Transverse colon (tissue), 4 donors: ENCODE measurements at regions of chr13 and their contacts with region 1.

Region 1: DNA sequence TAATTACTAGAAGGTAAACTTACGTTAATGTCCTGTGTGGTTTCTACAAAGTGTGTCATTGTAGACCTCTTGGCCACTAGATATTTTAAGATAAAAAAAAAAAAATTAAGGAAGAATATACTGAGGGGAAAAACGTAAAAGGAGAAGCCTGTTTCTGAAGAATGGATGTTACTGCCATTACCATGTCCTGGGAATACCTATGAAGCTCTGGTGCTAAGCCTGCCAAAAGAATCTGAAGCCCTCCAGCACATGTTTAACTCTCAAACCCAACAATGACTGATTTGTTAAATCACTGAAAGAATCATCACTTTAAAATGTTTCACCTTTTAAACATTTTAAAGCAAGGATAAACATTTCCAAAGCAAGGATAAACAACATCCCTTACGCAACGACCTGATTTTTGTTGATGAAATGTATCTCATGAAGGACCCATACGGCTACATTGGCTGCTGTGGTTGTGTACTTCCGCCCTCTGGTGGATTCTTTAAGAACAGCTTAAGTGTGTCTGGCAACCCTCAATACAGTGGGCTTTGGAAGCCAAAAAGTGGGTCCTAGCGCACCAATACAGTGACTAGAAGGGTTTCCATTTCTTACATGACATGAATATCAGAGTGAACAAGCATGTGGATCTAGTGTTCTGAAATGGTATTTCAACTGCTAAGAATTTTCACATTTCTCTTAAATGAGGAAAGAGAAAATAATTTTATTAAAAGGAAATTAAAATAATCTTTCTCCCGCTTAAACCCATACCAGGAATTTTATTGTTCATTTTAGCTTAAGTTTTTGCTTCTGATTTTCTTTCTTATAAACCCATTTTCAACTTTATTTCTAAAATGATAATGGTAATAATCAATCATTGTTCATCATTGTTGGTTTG is 74.5 kb upstream of the RAP2A start:
- DNase-seq: peak; percentile 37
- H3K4me3 ChIP-seq: no peak overlapping the region
- H3K27ac ChIP-seq: peak overlapping the region in 2 of 4 donors; percentile 23 to 24
- H3K4me1 ChIP-seq: peaks cover 0 to 8% (median 2%) of the 10 kb centered on the region in 4 donors
- H3K27me3 ChIP-seq: no peaks in the 10 kb centered on the region
- CTCF ChIP-seq: peak; percentile 79 to 87 (median 85)
- EP300 ChIP-seq: no peak
- POLR2A ChIP-seq: no peak

Region 2: GRCh38 chr13:97026531-97027161 is 332.8 kb before region 1 on chr13:
- in situ Hi-C with region 1: no loop called
- intact Hi-C with region 1: loop called (anchors 10 kb)
- DNase-seq: no peak
- H3K4me3 ChIP-seq: no peak overlapping the region
- H3K27ac ChIP-seq: peak overlapping the region in 1 of 4 donors; percentile 21
- H3K4me1 ChIP-seq: peaks cover 0 to 12% (median 5%) of the 10 kb centered on the region in 4 donors
- H3K27me3 ChIP-seq: no peaks in the 10 kb centered on the region
- CTCF ChIP-seq: no peak
- EP300 ChIP-seq: no peak
- POLR2A ChIP-seq: no peak

Region 3: DNA sequence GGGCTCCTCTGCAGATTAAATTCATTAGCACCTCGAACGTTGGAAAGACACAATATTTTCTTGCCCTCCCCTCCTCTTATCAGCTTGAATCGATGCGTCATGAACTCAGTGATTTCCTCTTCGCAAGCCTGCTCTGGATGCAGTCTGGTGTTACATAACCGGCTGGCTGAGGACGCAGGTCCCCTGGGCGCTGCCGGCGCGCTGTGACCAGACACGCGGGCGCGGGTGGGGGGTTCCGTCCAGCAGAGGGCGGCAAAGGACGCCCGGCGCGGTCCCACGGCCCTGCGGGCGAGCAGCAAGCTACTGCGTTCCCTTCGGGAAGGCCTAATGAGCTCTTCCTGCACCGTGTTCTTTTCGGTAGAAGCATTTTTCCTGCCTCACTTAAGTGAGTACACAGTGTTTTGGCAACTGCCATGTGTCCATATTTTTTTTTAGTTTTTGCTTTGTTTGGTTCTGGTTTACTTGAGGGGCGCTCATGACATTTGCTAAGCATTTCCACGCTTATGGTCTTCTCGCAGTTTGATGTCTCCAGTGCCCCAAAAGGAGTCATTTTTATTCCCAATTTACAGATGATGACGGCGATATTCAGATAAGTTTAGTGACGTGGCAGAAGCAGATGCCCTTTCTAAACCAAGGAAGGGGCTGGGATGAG is 249.5 kb before region 1 on chr13:
- in situ Hi-C with region 1: loop called in 1 of 4 experiments (anchors 10 kb)
- intact Hi-C with region 1: loop called (anchors 5 kb)
- DNase-seq: peak; percentile 92
- H3K4me3 ChIP-seq: peak overlapping the region in 1 of 4 donors; percentile 8
- H3K27ac ChIP-seq: peak overlapping the region; percentile 39 to 84 (median 80)
- H3K4me1 ChIP-seq: peaks cover 11 to 38% (median 26%) of the 10 kb centered on the region in 4 donors
- H3K27me3 ChIP-seq: no peaks in the 10 kb centered on the region
- CTCF ChIP-seq: peak; percentile 93 to 97 (median 96)
- EP300 ChIP-seq: no peak
- POLR2A ChIP-seq: no peak

Region 4: DNA sequence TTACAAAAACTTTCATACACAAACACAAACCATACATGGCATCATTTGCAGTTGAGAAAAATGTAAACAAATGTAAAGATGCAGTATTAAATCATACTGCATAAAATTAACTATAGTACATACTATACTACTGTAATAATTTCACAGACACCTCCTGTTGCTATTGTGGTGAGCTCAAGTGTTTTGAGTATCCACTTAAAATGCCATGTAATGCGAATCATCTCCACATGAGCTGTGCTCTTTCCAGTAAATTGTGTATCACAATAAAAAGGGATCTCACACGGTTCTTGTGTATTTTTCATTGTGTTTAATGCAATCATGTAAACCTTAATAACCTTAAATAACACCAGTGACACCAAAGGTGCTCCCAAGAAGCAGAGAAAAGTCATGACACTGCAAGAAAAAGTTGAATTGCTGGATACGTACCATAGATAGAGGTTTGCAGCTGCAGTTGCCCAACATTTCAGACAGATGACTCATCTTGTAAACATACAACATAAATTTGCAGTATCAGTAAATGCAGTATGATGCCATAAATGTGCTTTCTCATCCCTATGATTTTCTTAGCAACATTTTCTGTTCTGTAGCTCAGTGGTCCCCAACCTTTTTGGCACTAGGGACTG is 241.2 kb after region 1 on chr13:
- in situ Hi-C with region 1: no loop called
- intact Hi-C with region 1: no loop called
- DNase-seq: no peak
- H3K4me3 ChIP-seq: no peak overlapping the region
- H3K27ac ChIP-seq: no peak overlapping the region
- H3K4me1 ChIP-seq: no peaks in the 10 kb centered on the region
- H3K27me3 ChIP-seq: no peaks in the 10 kb centered on the region
- CTCF ChIP-seq: no peak
- EP300 ChIP-seq: no peak
- POLR2A ChIP-seq: no peak

Region 5: GRCh38 chr13:98685146-98685545 is 1325.7 kb after region 1 on chr13:
- in situ Hi-C with region 1: no loop called
- intact Hi-C with region 1: no loop called
- DNase-seq: no peak
- H3K4me3 ChIP-seq: no peak overlapping the region
- H3K27ac ChIP-seq: no peak overlapping the region
- H3K4me1 ChIP-seq: no peaks in the 10 kb centered on the region
- H3K27me3 ChIP-seq: no peaks in the 10 kb centered on the region
- CTCF ChIP-seq: no peak
- EP300 ChIP-seq: no peak
- POLR2A ChIP-seq: no peak